Endothelial cell of umbilical vein (primary cell): ENCODE measurements at regions of chr22 and their contacts with region 1.

Region 1: DNA sequence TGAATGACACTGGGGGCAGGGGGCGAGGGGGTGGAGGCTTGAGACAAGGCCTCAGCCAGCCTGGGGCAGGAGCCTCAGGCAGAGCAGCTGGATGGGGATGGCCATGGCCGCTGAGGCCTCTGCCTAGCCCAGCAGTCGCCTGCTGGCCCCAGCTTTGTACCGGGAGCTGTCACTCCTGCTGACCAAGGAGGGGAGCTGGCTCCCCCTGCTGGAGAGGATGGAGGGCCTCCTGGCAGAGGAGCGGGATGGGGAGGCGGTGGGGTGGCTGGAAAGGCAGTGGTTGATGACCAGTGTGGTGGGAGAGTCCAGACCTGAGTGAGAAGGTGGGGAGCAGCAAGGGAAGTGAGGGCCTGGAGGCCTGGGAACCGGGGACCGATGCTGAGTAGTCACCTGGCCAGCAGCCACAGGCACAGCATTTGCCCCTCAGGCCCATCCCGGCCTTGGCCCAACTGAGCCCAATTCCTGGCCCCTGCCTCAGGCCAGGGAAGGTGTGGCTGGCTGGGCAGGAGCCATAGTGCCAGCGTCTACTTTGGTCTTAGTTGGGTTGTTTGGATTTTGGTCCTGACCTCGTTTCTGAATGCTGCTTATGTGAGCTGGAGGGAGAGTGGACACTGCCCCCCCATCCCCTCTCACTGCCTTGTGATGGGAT is 6.0 kb upstream of the SUSD2 start:
- DNase-seq: peak; percentile 65
- H3K4me3 ChIP-seq: no peak overlapping the region
- H3K27ac ChIP-seq: no peak overlapping the region
- H3K4me1 ChIP-seq: no peaks in the 10 kb centered on the region
- H3K27me3 ChIP-seq: no peaks in the 10 kb centered on the region
- CTCF ChIP-seq: peak; percentile 85 to 95
- POLR2A ChIP-seq: no peak

Region 2: GRCh38 chr22:23857606-23858483 is 317.4 kb before region 1 on chr22 and contains the start of gene SLC2A11:
- CTCF ChIA-PET with region 1: interaction called, 8 read pairs
- POLR2A ChIA-PET with region 1: no interaction called
- dilution Hi-C with region 1: no loop called
- intact Hi-C with region 1: loop called (anchors 10 kb)
- DNase-seq: peak; percentile 98
- H3K4me3 ChIP-seq: peak within 1 kb of the TSS; percentile 64 to 83 (median 65)
- H3K27ac ChIP-seq: no peak within 1 kb of the TSS
- H3K4me1 ChIP-seq: peaks cover 15% of the 10 kb centered on the region
- H3K27me3 ChIP-seq: no peaks in the 10 kb centered on the region
- CTCF ChIP-seq: peak in 1 of 2 donors; percentile 32
- POLR2A ChIP-seq: peak; percentile 76
- total RNA-seq, gene SLC2A11: 3.6 and 4.6 TPM in 2 replicates

Region 3: GRCh38 chr22:23984430-23984829 is 190.9 kb before region 1 on chr22:
- CTCF ChIA-PET with region 1: interaction called, 12 read pairs
- POLR2A ChIA-PET with region 1: no interaction called
- dilution Hi-C with region 1: no loop called
- intact Hi-C with region 1: no loop called
- DNase-seq: peak; percentile 34
- H3K4me3 ChIP-seq: no peak overlapping the region
- H3K27ac ChIP-seq: no peak overlapping the region
- H3K4me1 ChIP-seq: no peaks in the 10 kb centered on the region
- H3K27me3 ChIP-seq: no peaks in the 10 kb centered on the region
- CTCF ChIP-seq: peak; percentile 46
- POLR2A ChIP-seq: no peak

Region 4: GRCh38 chr22:24106385-24107381 is 68.6 kb before region 1 on chr22:
- CTCF ChIA-PET with region 1: interaction called, 15 read pairs
- POLR2A ChIA-PET with region 1: no interaction called
- dilution Hi-C with region 1: no loop called
- intact Hi-C with region 1: no loop called
- DNase-seq: peak; percentile 5
- H3K4me3 ChIP-seq: no peak overlapping the region
- H3K27ac ChIP-seq: no peak overlapping the region
- H3K4me1 ChIP-seq: no peaks in the 10 kb centered on the region
- H3K27me3 ChIP-seq: no peaks in the 10 kb centered on the region
- CTCF ChIP-seq: no peak
- POLR2A ChIP-seq: no peak

Region 5: DNA sequence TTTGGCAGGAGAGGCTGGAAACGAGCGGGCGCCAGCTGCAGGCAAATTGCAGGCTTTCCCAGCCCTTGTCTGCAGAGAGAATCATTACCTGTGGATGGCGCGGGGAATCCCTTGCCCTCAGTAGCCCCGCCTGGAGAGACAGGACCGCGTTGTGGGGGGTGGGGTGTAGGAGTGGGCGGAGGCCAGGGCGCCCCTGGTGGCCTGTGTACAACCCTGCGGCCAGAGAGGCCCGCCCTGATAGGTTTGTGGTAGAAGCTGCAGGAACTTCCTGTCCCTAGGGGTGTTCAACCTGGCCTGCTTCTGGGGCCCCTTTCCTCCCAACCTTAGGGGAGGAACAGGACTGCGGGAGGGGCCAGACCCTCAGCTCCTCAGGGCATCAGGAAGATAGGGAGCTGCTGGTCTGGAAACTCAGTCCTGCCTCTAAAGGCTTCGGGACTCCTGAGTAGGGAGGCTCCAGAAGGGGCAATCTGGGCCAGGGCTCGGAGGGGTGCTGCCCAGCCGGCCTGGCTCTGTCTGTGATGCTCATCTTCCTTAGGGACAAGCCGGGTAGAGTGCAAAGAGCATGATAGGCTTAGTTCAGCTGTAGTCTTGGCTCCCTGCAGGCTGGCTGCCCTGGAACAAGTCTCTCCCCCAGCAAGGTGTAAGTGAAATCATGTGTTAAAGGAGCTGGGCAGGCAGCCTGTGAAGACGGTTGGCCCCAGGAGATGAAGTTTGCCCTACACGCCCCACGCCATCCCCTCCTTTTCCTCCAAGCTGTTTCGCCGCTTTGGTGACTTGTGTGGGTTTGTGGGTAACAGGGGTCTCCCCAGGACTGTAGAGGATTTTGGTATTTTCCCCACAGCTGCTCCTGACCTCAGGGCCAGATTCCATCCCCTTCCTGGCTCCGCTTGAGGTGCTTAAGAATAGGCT is 18.1 kb before region 1 on chr22:
- CTCF ChIA-PET with region 1: interaction called, 40 read pairs
- POLR2A ChIA-PET with region 1: no interaction called
- dilution Hi-C with region 1: no loop called
- intact Hi-C with region 1: loop called (anchors 2 kb)
- DNase-seq: peak; percentile 75
- H3K4me3 ChIP-seq: peak overlapping the region; percentile 53 to 91 (median 76)
- H3K27ac ChIP-seq: no peak overlapping the region
- H3K4me1 ChIP-seq: peaks cover 13% of the 10 kb centered on the region
- H3K27me3 ChIP-seq: no peaks in the 10 kb centered on the region
- CTCF ChIP-seq: peak; percentile 89 to 97
- POLR2A ChIP-seq: no peak

Region 6: DNA sequence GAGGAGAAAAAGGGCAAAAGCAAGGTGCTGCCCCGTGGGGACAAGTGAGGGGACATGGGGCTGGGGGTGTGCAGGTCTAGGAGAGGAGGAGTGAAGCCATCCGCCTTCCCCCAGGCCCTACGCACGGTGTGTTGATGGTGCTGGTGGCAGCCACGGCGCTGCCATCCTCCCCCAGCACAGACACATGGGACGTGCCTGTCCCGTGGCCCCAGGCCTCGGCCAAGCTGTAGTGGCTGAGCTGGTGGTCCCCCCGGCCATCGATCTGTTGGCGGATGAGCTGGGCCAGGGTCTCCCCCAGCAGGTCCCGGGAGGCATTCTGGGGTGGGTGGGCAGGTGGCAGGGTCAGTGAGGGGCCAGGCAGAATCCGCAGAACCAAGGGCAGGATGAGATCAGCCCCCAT is 50.7 kb after region 1 on chr22:
- CTCF ChIA-PET with region 1: no interaction called
- POLR2A ChIA-PET with region 1: no interaction called
- dilution Hi-C with region 1: no loop called
- intact Hi-C with region 1: no loop called
- DNase-seq: no peak
- H3K4me3 ChIP-seq: no peak overlapping the region
- H3K27ac ChIP-seq: no peak overlapping the region
- H3K4me1 ChIP-seq: no peaks in the 10 kb centered on the region
- H3K27me3 ChIP-seq: no peaks in the 10 kb centered on the region
- CTCF ChIP-seq: no peak
- POLR2A ChIP-seq: no peak